KBM-7 (cell line): ENCODE measurements at regions of chr5 and their contacts with region 1.

Region 1: GRCh38 chr5:39379693-39380092 is 15.4 kb upstream of the C9 start:
- DNase-seq: no peak

Region 2: GRCh38 chr5:39555788-39556187 is 176.1 kb after region 1 on chr5:
- in situ Hi-C with region 1: loop called (anchors 10 kb)
- DNase-seq: peak; percentile 14

Region 3: GRCh38 chr5:40307920-40308319 is 928.2 kb after region 1 on chr5:
- in situ Hi-C with region 1: no loop called
- DNase-seq: no peak